Caco-2 (cell line): ENCODE measurements at regions of chr3 and their contacts with region 1.

Region 1: DNA sequence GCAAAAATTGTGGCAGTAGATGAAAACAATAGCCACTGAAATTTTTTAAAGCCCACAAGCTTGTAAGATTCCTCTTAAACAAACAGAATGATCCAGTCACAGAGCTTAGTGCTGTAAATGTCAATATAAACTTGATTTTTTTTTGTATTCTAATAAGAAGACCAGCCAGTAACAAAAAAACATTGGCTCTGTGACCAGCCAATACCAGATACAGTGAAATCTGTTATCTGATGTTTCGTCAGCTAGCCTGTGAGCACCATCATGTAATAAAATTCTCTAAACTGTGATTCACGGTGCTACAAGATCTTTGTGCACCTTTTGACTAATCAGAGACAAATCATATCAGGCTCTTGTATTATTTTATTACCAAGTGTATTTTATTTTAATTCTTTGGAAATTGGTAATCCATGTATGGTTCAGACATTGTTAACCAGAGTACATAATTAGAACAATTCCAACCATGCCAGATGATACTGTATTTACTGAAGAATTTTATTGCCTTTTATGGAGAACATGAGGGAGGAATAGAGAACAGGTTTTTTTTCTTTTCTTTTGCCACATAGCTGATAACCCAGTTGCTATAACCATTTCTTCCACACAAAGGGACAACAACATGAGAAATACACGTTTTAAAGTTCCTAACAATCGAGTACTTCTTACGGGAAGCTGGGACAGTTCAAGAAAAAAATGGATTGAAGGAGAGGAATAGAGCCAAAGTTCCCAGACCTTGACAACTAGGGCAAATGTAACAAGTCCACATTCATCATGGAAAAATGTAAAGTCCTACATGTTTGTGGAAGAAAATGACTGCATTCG is 71.9 kb downstream of the FILIP1L start:
- DNase-seq: peak in 1 of 2 experiments; percentile 23
- H3K4me3 ChIP-seq: no peak overlapping the region
- H3K4me3 Mint-ChIP-seq: no peak overlapping the region
- H3K27ac Mint-ChIP-seq: peak overlapping the region; percentile 87
- H3K4me1 ChIP-seq: peaks cover 78% of the 10 kb centered on the region
- H3K4me1 Mint-ChIP-seq: peaks cover 47% of the 10 kb centered on the region
- H3K27me3 ChIP-seq: no peaks in the 10 kb centered on the region
- H3K27me3 Mint-ChIP-seq: no peaks in the 10 kb centered on the region
- CTCF ChIP-seq: no peak

Region 2: GRCh38 chr3:100053951-100054620 is 11.7 kb after region 1 on chr3:
- CTCF ChIA-PET with region 1: interaction called, 5 read pairs
- POLR2A ChIA-PET with region 1: interaction called, 5 read pairs
- intact Hi-C with region 1: loop called (anchors 1 kb)
- DNase-seq: peak; percentile 70 to 73
- H3K4me3 ChIP-seq: no peak overlapping the region
- H3K4me3 Mint-ChIP-seq: peak overlapping the region; percentile 48
- H3K27ac Mint-ChIP-seq: peak overlapping the region; percentile 83
- H3K4me1 ChIP-seq: peaks cover 56% of the 10 kb centered on the region
- H3K4me1 Mint-ChIP-seq: peaks cover 51% of the 10 kb centered on the region
- H3K27me3 ChIP-seq: no peaks in the 10 kb centered on the region
- H3K27me3 Mint-ChIP-seq: no peaks in the 10 kb centered on the region
- CTCF ChIP-seq: no peak

Region 3: GRCh38 chr3:100334488-100335351 is 292.3 kb after region 1 on chr3 and contains the start of gene NIT2:
- CTCF ChIA-PET with region 1: no interaction called
- POLR2A ChIA-PET with region 1: no interaction called
- intact Hi-C with region 1: no loop called
- DNase-seq: peak; percentile 89 to 90
- H3K4me3 ChIP-seq: peak within 1 kb of the TSS; percentile 90
- H3K4me3 Mint-ChIP-seq: peak within 1 kb of the TSS; percentile 85
- H3K27ac Mint-ChIP-seq: peak within 1 kb of the TSS; percentile 89
- H3K4me1 ChIP-seq: peaks cover 19% of the 10 kb centered on the region
- H3K4me1 Mint-ChIP-seq: peaks cover 22% of the 10 kb centered on the region
- H3K27me3 ChIP-seq: no peaks in the 10 kb centered on the region
- H3K27me3 Mint-ChIP-seq: no peaks in the 10 kb centered on the region
- CTCF ChIP-seq: peak in 1 of 2 experiments; percentile 9
- total RNA-seq, gene NIT2: 59.7 and 64.1 TPM in 2 replicates